ENCODE measurements at regions of chr1 and their contacts with region 1.

Region 1: GRCh38 chr1:10209905-10210810 is at the start of gene KIF1B:
- DNase-seq: peak; percentile 98
- ATAC-seq: peak; percentile 97
- H3K4me3 Mint-ChIP-seq: peak within 1 kb of the TSS; percentile 89
- H3K27ac Mint-ChIP-seq: peak within 1 kb of the TSS; percentile 61
- H3K4me1 Mint-ChIP-seq: peaks cover 25% of the 10 kb centered on the region
- H3K27me3 Mint-ChIP-seq: no peaks in the 10 kb centered on the region
- CTCF ChIP-seq: peak; percentile 87
- total RNA-seq, gene KIF1B: 5.9 and 7.2 TPM in 2 replicates

Region 2: DNA sequence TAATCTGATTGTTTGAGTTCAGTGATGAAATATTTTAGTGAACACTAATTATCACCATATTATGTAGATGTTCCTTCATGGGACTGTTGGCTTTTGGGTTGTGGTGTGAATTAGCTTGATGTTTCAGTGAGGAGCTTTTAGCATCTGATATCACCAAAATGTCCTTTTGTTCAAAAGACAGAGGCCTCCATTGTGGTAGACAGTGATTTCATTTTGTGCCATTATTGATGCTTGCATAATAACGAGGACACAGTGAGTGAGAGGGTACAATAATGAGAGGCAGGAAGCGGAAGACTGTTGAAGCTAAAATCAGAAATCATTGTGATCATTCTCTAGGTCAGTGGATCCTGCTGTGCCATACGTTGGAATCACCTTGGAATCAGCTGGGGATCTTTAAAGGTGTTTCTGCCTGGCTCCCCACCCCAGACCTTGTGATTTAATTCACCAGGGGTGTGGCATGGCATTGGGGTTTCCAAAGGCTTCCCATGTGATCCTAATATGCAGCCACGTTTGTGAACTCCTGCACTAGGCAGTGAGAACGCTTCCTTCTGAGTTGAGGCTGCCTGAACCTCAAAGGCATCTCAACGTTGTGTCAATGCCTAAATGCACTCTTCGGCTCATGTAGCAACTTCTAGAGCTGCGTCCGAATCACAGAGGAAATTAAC is 81.9 kb before region 1 on chr1:
- CTCF ChIA-PET with region 1: no interaction called
- POLR2A ChIA-PET with region 1: no interaction called
- intact Hi-C with region 1: no loop called
- DNase-seq: no peak
- ATAC-seq: no peak
- H3K4me3 Mint-ChIP-seq: no peak overlapping the region
- H3K27ac Mint-ChIP-seq: no peak overlapping the region
- H3K4me1 Mint-ChIP-seq: no peaks in the 10 kb centered on the region
- H3K27me3 Mint-ChIP-seq: no peaks in the 10 kb centered on the region
- CTCF ChIP-seq: no peak

Region 3: GRCh38 chr1:10242811-10243210 is 32.7 kb after region 1 on chr1:
- CTCF ChIA-PET with region 1: no interaction called
- POLR2A ChIA-PET with region 1: no interaction called
- intact Hi-C with region 1: no loop called
- DNase-seq: no peak
- ATAC-seq: no peak
- H3K4me3 Mint-ChIP-seq: no peak overlapping the region
- H3K27ac Mint-ChIP-seq: peak overlapping the region; percentile 24
- H3K4me1 Mint-ChIP-seq: peaks cover 6% of the 10 kb centered on the region
- H3K27me3 Mint-ChIP-seq: no peaks in the 10 kb centered on the region
- CTCF ChIP-seq: no peak

Region 4: GRCh38 chr1:10324627-10325026 is 114.5 kb after region 1 on chr1:
- CTCF ChIA-PET with region 1: no interaction called
- POLR2A ChIA-PET with region 1: no interaction called
- intact Hi-C with region 1: loop called (anchors 5 kb)
- DNase-seq: no peak
- ATAC-seq: no peak
- H3K4me3 Mint-ChIP-seq: no peak overlapping the region
- H3K27ac Mint-ChIP-seq: no peak overlapping the region
- H3K4me1 Mint-ChIP-seq: no peaks in the 10 kb centered on the region
- H3K27me3 Mint-ChIP-seq: no peaks in the 10 kb centered on the region
- CTCF ChIP-seq: no peak

Region 5: DNA sequence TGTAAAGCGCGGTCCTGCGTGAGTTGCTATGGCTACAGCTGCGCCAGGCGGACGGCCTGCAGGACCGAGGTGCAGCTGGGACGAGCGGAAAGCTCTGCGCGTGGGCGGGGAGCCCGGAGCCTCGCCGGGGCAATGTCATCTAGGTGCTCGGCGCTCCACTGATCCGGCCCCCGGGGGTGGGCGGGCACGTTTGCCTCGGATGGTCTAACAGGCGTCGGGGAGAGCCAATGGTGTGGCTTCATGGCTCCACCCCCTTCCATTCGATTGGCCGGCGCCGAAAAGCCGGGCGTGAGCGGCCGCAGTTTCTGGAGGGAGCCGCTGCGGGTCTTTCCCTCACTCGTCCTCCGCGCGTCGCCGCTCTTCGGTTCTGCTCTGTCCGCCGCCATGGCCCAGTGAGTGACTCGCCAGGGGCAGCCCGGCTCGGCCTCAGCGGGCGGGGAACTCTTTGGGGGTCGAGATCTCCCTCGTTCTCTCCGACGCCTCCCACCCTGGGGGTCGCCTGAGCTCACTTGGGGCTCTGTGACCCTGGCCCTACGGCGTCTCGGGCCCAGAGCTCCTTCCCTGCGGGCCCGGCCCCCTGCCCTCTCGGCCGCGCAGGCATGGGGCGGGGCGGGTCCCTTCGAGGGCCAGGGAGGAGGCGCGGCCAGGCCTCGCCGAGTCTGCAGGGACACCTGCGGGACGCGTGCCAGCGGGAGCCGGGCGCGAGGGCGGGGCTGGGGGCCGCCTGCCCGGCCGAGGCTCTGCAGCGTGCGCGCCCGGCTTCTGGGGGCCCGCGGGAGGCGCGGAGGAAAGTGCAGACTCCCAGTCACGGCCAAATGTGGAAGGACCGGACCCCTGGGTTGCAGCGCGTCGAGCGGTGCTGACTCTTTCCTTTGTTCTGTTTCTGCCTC is 188.8 kb after region 1 on chr1 and contains the start of gene PGD:
- CTCF ChIA-PET with region 1: interaction called, 3 read pairs
- POLR2A ChIA-PET with region 1: no interaction called
- intact Hi-C with region 1: loop called (anchors 1 kb)
- DNase-seq: peak; percentile 95
- ATAC-seq: peak; percentile 94
- H3K4me3 Mint-ChIP-seq: peak within 1 kb of the TSS; percentile 92
- H3K27ac Mint-ChIP-seq: peak within 1 kb of the TSS; percentile 87
- H3K4me1 Mint-ChIP-seq: peaks cover 22% of the 10 kb centered on the region
- H3K27me3 Mint-ChIP-seq: no peaks in the 10 kb centered on the region
- CTCF ChIP-seq: no peak
- total RNA-seq, gene PGD: 108 and 112 TPM in 2 replicates

Region 6: DNA sequence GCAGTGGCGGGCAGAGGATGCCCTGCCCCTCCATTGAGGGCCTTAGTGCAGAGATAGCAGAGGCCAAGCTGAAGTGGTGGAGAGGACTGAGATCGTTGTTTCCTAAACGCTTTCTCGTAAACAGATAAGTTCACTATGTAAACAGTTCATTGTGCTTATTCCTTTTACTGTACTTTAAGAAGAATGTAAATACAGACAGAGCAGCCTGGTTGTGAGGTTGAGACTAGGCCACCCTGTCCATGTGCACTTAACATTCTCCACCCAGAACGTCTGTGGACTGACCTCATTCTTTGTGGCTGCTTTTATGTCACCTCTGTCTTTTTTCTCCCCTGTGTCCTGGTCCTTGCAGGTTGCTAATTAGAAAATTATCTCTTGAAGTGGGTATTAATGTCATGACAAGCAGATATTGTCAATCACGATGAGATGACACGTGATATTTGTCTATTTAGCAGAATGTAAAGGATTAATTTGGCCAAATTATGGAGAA is 228.6 kb after region 1 on chr1:
- CTCF ChIA-PET with region 1: no interaction called
- POLR2A ChIA-PET with region 1: no interaction called
- intact Hi-C with region 1: no loop called
- DNase-seq: no peak
- ATAC-seq: no peak
- H3K4me3 Mint-ChIP-seq: no peak overlapping the region
- H3K27ac Mint-ChIP-seq: no peak overlapping the region
- H3K4me1 Mint-ChIP-seq: peaks cover 4% of the 10 kb centered on the region
- H3K27me3 Mint-ChIP-seq: no peaks in the 10 kb centered on the region
- CTCF ChIP-seq: no peak

Region 7: DNA sequence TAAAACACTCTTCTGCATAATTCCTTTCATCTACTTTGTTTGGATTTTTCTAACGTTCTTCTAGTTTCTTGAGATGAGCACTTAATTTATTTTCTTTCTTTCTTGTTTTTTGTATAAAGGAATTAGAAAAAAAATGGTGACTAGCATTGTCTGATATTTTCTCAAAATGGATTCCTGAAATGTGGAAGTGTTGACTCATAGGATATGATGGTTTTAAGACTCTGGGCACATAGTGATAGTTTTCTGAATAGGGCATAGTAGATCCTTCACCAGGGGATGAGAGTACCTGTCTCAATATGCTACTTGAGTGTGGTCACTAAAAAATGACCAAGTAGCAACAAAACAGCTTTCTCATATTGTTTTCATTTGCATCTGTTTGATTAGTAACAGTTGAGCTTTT is 365.5 kb after region 1 on chr1:
- CTCF ChIA-PET with region 1: no interaction called
- POLR2A ChIA-PET with region 1: no interaction called
- intact Hi-C with region 1: no loop called
- DNase-seq: no peak
- ATAC-seq: no peak
- H3K4me3 Mint-ChIP-seq: no peak overlapping the region
- H3K27ac Mint-ChIP-seq: no peak overlapping the region
- H3K4me1 Mint-ChIP-seq: no peaks in the 10 kb centered on the region
- H3K27me3 Mint-ChIP-seq: no peaks in the 10 kb centered on the region
- CTCF ChIP-seq: no peak

Region 8: DNA sequence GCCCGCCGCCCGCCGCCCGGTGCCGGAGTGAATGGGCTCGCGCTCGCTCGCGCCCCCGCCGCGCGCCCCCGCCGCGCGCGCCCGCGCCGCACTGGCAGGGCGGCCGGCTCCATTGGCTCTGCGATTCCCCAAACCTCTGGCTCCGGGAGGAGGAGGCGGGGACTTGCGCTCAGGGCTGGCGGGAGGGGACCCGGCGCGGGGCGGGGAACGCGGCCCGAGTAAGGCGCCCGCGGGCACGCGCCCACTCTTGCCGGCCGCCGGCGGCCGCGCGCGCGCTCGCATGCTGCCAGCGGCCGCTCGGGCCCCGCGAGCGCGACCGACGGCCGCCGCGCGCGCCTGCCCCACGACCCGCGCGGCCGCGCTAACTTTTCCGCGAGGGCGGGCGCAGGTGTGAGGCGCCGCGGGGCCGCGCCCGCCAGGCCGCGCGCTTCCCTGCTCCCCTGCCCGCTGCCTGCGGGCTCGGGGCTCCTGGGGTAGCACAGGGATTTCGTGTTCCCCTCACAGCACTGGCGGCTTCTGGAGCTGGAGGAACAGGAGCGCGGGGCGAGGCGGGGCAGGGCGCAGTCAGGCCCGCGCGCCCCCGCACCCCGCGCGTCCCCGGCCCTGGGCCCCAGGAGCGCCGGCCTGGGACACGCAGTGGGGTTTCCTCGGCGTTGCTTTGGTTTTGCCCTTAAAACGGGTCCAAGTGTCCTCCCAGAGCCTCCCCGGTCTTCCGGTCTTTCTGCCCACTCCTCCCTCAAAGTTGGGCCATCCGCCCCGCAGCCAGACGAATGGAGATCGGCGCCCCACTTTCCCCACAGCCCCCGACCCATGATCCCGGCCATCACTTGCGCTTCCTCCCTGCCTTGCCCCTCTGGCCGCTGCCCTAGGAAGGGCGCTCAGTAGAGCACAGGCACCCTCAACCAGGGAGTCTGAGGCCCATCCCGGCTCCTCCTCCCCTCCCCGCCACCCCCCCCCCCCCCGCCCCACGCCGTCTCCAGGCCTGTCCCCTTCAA is 484.8 kb after region 1 on chr1:
- CTCF ChIA-PET with region 1: no interaction called
- POLR2A ChIA-PET with region 1: no interaction called
- intact Hi-C with region 1: loop called (anchors 1 kb)
- DNase-seq: peak; percentile 79
- ATAC-seq: peak; percentile 76
- H3K4me3 Mint-ChIP-seq: peak overlapping the region; percentile 81
- H3K27ac Mint-ChIP-seq: peak overlapping the region; percentile 74
- H3K4me1 Mint-ChIP-seq: peaks cover 24% of the 10 kb centered on the region
- H3K27me3 Mint-ChIP-seq: peaks cover 5% of the 10 kb centered on the region
- CTCF ChIP-seq: no peak

Measured in activated B cell treated with CpG ODN at 0.5 μM for 24 hours (primary cell).